ENCODE measurements at regions of chr2 and their contacts with region 1.

Region 1: DNA sequence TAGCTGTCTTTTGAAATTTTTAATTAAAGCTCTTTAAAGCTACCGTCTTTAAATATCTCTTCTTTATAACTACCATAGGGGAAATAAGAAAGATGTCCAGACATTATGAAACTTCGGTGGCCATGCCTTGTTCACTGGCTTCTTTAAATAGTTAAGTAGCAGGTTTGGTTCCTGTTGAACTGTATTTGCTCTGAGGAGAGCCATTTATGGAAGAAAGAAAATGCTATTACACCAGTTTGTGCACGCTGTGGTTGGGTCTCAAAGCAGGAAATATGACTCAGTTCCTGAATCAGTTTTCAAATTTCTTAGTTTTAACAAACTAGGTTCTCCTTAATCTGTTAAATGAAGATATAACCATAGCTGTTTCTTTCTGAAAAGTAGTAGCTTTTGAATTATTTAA is 12.2 kb downstream of the ARPC2 start:
- DNase-seq: peak in 22 of 35 experiments; percentile 9 to 71 (median 26)
- ATAC-seq: peak; percentile 84 to 94 (median 90)
- H3K4me3 ChIP-seq: no peak overlapping the region
- H3K4me3 Mint-ChIP-seq: peak overlapping the region; percentile 48 to 70 (median 66)
- H3K27ac ChIP-seq: peak overlapping the region; percentile 70
- H3K27ac Mint-ChIP-seq: peak overlapping the region; percentile 81 to 92
- H3K4me1 ChIP-seq: peaks cover 46 to 47% of the 10 kb centered on the region in 2 experiments
- H3K4me1 Mint-ChIP-seq: peaks cover 81 to 84% (median 82%) of the 10 kb centered on the region in 3 donors
- H3K27me3 ChIP-seq: no peaks in the 10 kb centered on the region
- H3K27me3 Mint-ChIP-seq: no peaks in the 10 kb centered on the region

Region 2: DNA sequence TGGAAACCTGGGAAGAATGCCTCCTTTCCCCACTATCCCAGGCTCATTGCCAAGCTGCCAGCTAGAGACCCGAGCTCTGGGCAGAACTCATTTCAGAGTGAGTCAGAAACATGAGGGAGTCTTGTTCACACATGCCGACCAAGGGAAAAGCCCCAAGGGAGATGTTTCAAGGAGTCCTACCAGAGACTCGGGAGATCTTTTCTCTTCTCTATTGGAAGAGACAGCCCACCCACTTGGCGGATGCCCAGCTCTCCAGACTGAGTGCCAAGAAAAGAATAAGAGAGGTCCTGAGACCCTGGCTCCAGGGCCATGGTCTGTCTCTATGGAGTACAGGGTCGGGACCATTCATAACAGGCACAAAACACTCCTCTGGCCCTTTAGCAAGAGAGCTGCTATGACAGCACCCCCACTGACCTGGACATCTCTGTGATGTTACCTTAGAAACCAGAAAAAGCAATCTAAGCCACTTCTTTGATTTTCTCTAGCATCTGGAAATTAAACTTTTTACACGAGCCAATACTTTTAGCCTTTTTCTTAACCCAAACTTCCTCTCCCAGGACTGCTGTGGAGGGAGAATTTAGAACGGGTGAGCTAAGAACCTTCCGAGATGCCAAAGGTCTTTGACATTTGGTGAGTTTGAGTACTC is 1515.4 kb before region 1 on chr2:
- CTCF ChIA-PET with region 1: no interaction called
- POLR2A ChIA-PET with region 1: interaction called in 1 of 2 experiments, 10 read pairs
- DNase-seq: no peak
- ATAC-seq: no peak
- H3K4me3 ChIP-seq: no peak overlapping the region
- H3K4me3 Mint-ChIP-seq: no peak overlapping the region
- H3K27ac ChIP-seq: no peak overlapping the region
- H3K27ac Mint-ChIP-seq: no peak overlapping the region
- H3K4me1 ChIP-seq: no peaks in the 10 kb centered on the region
- H3K4me1 Mint-ChIP-seq: no peaks in the 10 kb centered on the region
- H3K27me3 ChIP-seq: peaks cover 0 to 8% of the 10 kb centered on the region in 2 experiments
- H3K27me3 Mint-ChIP-seq: peaks cover 0 to 17% of the 10 kb centered on the region in 2 donors

Region 3: DNA sequence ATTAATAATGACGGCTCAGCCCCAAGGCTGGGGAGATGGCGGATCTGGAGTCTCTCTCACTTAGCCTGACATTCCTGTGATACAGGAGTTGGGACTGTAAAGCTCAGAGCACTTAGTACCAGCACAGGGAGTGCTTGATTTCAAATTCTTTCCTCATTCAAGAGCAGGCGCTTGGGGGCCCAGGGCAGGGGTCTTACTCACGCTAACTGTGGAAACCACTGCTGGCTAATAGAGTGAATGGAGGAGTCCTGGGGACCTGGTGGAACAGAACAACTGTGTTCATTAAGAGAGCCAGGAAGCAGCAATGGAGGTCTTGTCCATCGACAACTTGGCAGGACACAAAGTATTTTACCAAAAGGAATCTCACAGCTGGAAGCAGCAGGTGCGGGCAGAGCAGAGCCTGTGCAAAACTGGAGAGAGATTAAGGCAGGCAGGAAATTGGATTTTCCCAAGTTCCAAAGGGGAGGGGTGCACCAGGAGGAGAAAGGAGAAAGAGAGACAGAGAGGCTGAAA is 585.4 kb before region 1 on chr2:
- CTCF ChIA-PET with region 1: no interaction called
- POLR2A ChIA-PET with region 1: no interaction called
- DNase-seq: no peak
- ATAC-seq: no peak
- H3K4me3 ChIP-seq: no peak overlapping the region
- H3K4me3 Mint-ChIP-seq: no peak overlapping the region
- H3K27ac ChIP-seq: no peak overlapping the region
- H3K27ac Mint-ChIP-seq: no peak overlapping the region
- H3K4me1 ChIP-seq: no peaks in the 10 kb centered on the region
- H3K4me1 Mint-ChIP-seq: peaks cover 0 to 5% (median 0%) of the 10 kb centered on the region in 3 donors
- H3K27me3 ChIP-seq: no peaks in the 10 kb centered on the region
- H3K27me3 Mint-ChIP-seq: no peaks in the 10 kb centered on the region

Region 4: GRCh38 chr2:218168635-218169462 is 60.4 kb before region 1 on chr2:
- CTCF ChIA-PET with region 1: interaction called in 1 of 2 experiments, 16 read pairs
- POLR2A ChIA-PET with region 1: no interaction called
- DNase-seq: peak; percentile 31 to 82 (median 63)
- ATAC-seq: peak; percentile 41 to 71 (median 51)
- H3K4me3 ChIP-seq: no peak overlapping the region
- H3K4me3 Mint-ChIP-seq: no peak overlapping the region
- H3K27ac ChIP-seq: no peak overlapping the region
- H3K27ac Mint-ChIP-seq: no peak overlapping the region
- H3K4me1 ChIP-seq: peaks cover 9 to 34% of the 10 kb centered on the region in 2 experiments
- H3K4me1 Mint-ChIP-seq: peaks cover 33 to 42% (median 39%) of the 10 kb centered on the region in 3 donors
- H3K27me3 ChIP-seq: peaks cover 0 to 11% of the 10 kb centered on the region in 2 experiments
- H3K27me3 Mint-ChIP-seq: peaks cover 8 to 9% of the 10 kb centered on the region in 2 donors

Region 5: GRCh38 chr2:218216674-218217359 is 12.4 kb before region 1 on chr2 and contains the start of gene ARPC2:
- CTCF ChIA-PET with region 1: interaction called, 3 to 33 read pairs
- POLR2A ChIA-PET with region 1: interaction called, 7 to 36 read pairs
- DNase-seq: peak; percentile 89 to 98 (median 94)
- ATAC-seq: peak; percentile 75 to 88 (median 79)
- H3K4me3 ChIP-seq: peak within 1 kb of the TSS; percentile 93 to 98
- H3K4me3 Mint-ChIP-seq: peak within 1 kb of the TSS; percentile 90 to 100 (median 90)
- H3K27ac ChIP-seq: peak within 1 kb of the TSS; percentile 96
- H3K27ac Mint-ChIP-seq: peak within 1 kb of the TSS; percentile 94 to 98
- H3K4me1 ChIP-seq: peaks cover 30 to 32% of the 10 kb centered on the region in 2 experiments
- H3K4me1 Mint-ChIP-seq: peaks cover 41 to 47% (median 43%) of the 10 kb centered on the region in 3 donors
- H3K27me3 ChIP-seq: no peaks in the 10 kb centered on the region
- H3K27me3 Mint-ChIP-seq: peaks cover 0 to 2% of the 10 kb centered on the region in 2 donors
- total RNA-seq, gene ARPC2: 347 to 487 (median 390) TPM

Region 6: DNA sequence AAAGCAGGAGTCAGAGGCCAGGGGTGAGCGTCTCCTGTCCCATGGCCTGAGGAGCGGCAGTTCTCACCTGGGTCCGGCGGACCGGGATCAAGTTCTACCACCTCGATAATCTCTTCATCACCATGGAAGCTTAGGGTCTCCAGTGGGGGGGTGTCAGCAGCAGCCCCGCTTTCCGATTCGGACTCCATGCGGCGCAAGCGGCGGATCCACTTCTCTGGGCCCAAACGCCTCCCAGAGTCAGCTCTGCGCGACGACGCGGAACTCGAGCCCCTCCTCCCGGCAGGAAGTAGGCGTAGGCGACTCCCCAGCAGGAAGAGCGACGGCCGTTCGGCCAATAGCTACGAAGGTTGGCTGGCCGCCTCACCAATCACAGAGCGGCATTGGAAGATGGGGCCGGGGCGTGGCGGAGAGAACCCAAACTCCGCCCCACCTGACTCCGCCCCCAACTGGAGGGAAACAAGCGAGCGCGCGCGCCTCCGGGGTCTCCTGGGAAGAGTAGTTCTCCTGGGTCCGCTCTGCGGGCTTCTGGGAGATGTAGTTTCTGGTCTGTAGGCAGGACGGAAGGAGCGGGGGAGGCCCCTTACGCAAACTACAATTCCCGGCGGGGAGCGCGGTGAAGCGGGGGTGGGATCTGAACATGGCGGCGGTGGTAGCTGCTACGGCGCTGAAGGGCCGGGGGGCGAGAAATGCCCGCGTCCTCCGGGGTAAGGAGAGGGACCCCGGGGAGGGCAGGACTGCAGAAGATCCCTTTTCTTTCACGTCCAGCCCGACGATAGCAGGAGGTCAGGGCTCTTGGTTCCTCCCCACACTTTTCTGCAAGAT is 40.9 kb after region 1 on chr2 and contains the starts of genes AAMP and PNKD:
- CTCF ChIA-PET with region 1: interaction called in 1 of 2 experiments, 5 read pairs
- POLR2A ChIA-PET with region 1: interaction called in 1 of 2 experiments, 11 read pairs
- DNase-seq: peak; percentile 99 to 100 (median 100)
- ATAC-seq: peak; percentile 90 to 94 (median 91)
- H3K4me3 ChIP-seq: peak within 1 kb of the TSS; percentile 80 to 96
- H3K4me3 Mint-ChIP-seq: peak within 1 kb of the TSS; percentile 92 to 95 (median 94)
- H3K27ac ChIP-seq: peak within 1 kb of the TSS; percentile 59
- H3K27ac Mint-ChIP-seq: peak within 1 kb of the TSS; percentile 87 to 92
- H3K4me1 ChIP-seq: peaks cover 18 to 48% of the 10 kb centered on the region in 2 experiments
- H3K4me1 Mint-ChIP-seq: peaks cover 47 to 61% (median 52%) of the 10 kb centered on the region in 3 donors
- H3K27me3 ChIP-seq: no peaks in the 10 kb centered on the region
- H3K27me3 Mint-ChIP-seq: no peaks in the 10 kb centered on the region
- total RNA-seq, gene AAMP: 46.2 to 71.3 (median 67.4) TPM
- total RNA-seq, gene PNKD: 17.4 to 33.1 (median 30.6) TPM

Region 7: DNA sequence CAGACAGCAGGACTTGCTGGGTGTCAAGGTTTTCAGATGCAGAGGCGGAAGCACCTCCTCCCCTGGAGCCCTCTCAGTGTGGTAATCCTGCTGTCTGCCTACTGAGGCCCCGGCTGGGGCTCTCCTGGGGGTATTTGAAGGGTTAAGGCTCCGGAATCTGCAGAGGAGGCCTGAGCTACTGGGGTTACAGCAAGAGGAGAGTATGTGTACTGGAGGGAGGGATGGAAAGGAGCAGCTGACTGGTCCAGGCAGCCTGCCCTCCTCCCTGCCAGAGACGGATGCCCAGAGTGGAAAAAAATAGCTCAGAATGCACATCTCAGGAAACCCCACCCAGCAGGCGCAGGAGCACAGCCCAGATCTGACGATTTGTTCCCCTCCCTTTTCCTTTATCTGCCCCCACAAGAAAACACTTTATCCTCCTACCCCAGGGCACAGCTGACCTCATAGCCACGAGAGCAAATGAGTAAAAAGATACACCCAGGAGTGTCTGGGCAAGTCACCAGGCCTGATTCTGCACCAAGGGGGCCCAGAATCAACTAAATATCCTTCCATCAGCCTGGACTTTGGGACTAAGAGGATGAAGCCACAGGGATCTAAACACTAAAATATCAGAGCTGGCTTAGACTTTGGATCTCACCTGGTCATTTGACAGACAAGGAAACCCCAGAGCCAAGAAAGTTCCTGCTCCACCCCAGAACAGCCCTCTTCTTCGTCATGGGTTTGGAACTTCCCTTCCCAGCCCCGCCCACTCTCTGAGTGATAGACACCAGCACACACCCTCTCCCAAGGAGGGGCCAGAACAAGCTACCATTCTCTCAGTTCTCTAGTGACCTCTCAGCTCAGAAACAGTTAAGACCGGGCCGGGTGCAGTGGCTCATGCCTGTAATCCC is 57.6 kb after region 1 on chr2:
- CTCF ChIA-PET with region 1: interaction called, 4 to 5 read pairs
- POLR2A ChIA-PET with region 1: interaction called in 1 of 2 experiments, 13 read pairs
- DNase-seq: peak; percentile 52 to 94 (median 77)
- ATAC-seq: peak; percentile 70 to 80 (median 72)
- H3K4me3 ChIP-seq: peak overlapping the region; percentile 58 to 72
- H3K4me3 Mint-ChIP-seq: peak overlapping the region; percentile 88 to 91 (median 91)
- H3K27ac ChIP-seq: peak overlapping the region; percentile 99
- H3K27ac Mint-ChIP-seq: peak overlapping the region; percentile 100
- H3K4me1 ChIP-seq: peaks cover 57 to 100% of the 10 kb centered on the region in 2 experiments
- H3K4me1 Mint-ChIP-seq: peaks cover 77 to 86% (median 83%) of the 10 kb centered on the region in 3 donors
- H3K27me3 ChIP-seq: no peaks in the 10 kb centered on the region
- H3K27me3 Mint-ChIP-seq: no peaks in the 10 kb centered on the region